Activated CD4-positive, alpha-beta memory T cell treated with anti-CD3 and anti-CD28 coated beads, Interleukin-2, amount 10 ng/mL, durations not matched to agents 7 days and 5 days (primary cell): ENCODE measurements at regions of chr7 and their contacts with region 1.

Region 1: GRCh38 chr7:32905175-32905662 is 13.7 kb upstream of the KBTBD2 start:
- DNase-seq: peak; percentile 90
- H3K4me3 Mint-ChIP-seq: peak overlapping the region; percentile 75
- H3K27ac Mint-ChIP-seq: peak overlapping the region; percentile 95
- H3K4me1 Mint-ChIP-seq: peaks cover 19% of the 10 kb centered on the region
- H3K27me3 Mint-ChIP-seq: no peaks in the 10 kb centered on the region

Region 2: GRCh38 chr7:32506266-32507054 is 398.8 kb before region 1 on chr7:
- CTCF ChIA-PET with region 1: no interaction called
- POLR2A ChIA-PET with region 1: no interaction called
- DNase-seq: no peak
- H3K4me3 Mint-ChIP-seq: no peak overlapping the region
- H3K27ac Mint-ChIP-seq: peak overlapping the region; percentile 47
- H3K4me1 Mint-ChIP-seq: peaks cover 28% of the 10 kb centered on the region
- H3K27me3 Mint-ChIP-seq: no peaks in the 10 kb centered on the region

Region 3: GRCh38 chr7:32865448-32866030 is 39.7 kb before region 1 on chr7:
- CTCF ChIA-PET with region 1: no interaction called
- POLR2A ChIA-PET with region 1: no interaction called
- DNase-seq: no peak
- H3K4me3 Mint-ChIP-seq: no peak overlapping the region
- H3K27ac Mint-ChIP-seq: no peak overlapping the region
- H3K4me1 Mint-ChIP-seq: peaks cover under 1% of the 10 kb centered on the region
- H3K27me3 Mint-ChIP-seq: no peaks in the 10 kb centered on the region

Region 4: GRCh38 chr7:32942786-32943653 is 37.8 kb after region 1 on chr7:
- CTCF ChIA-PET with region 1: interaction called, 16 read pairs
- POLR2A ChIA-PET with region 1: interaction called, 6 read pairs
- DNase-seq: peak; percentile 73
- H3K4me3 Mint-ChIP-seq: peak overlapping the region; percentile 90
- H3K27ac Mint-ChIP-seq: no peak overlapping the region
- H3K4me1 Mint-ChIP-seq: peaks cover 20% of the 10 kb centered on the region
- H3K27me3 Mint-ChIP-seq: peaks cover 12% of the 10 kb centered on the region